Activated CD4-positive, alpha-beta T cell treated with anti-CD3 and anti-CD28 coated beads, Interleukin-2, amount 10 ng/mL, durations not matched to agents 24 days and 14 days (primary cell): ENCODE measurements at regions of chr7 and their contacts with region 1.

Region 1: DNA sequence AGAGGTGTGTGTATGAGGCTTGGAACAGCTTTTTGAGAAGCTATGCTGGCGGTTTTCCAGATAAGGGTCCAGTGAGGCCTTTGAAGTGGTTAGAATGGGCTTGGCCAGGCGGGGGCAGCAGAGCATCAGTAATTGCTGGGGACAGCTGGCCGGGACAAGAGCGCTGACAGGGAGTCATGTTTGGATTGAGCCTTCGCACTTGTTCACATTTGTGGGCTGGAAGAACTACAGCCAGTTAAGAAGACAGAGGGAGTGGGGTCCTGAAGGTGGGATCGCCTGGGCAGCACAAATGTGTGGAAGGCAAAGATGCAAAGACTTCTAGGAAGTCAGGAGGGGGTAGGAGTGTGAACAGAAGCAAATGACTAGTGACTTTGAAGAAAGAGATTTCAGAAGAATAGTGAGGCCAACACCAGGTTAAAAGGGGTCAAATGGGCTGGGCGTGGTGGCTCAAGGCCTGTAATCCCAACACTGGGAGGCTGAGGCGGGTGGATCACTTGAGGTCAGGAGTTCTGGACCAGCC is 12.7 kb upstream of the SDHAF3 start:
- DNase-seq: peak; percentile 89
- H3K4me3 Mint-ChIP-seq: no peak overlapping the region
- H3K27ac Mint-ChIP-seq: no peak overlapping the region
- H3K4me1 Mint-ChIP-seq: no peaks in the 10 kb centered on the region
- H3K27me3 Mint-ChIP-seq: peaks cover 15% of the 10 kb centered on the region

Region 2: GRCh38 chr7:97094284-97094930 is 10.4 kb before region 1 on chr7:
- intact Hi-C with region 1: no loop called
- DNase-seq: peak; percentile 27
- H3K4me3 Mint-ChIP-seq: no peak overlapping the region
- H3K27ac Mint-ChIP-seq: no peak overlapping the region
- H3K4me1 Mint-ChIP-seq: no peaks in the 10 kb centered on the region
- H3K27me3 Mint-ChIP-seq: peaks cover 24% of the 10 kb centered on the region

Region 3: GRCh38 chr7:97130417-97131139 is 25.8 kb after region 1 on chr7:
- intact Hi-C with region 1: no loop called
- DNase-seq: peak; percentile 44
- H3K4me3 Mint-ChIP-seq: no peak overlapping the region
- H3K27ac Mint-ChIP-seq: no peak overlapping the region
- H3K4me1 Mint-ChIP-seq: no peaks in the 10 kb centered on the region
- H3K27me3 Mint-ChIP-seq: no peaks in the 10 kb centered on the region

Region 4: GRCh38 chr7:97179454-97180104 is 74.8 kb after region 1 on chr7:
- intact Hi-C with region 1: loop called (anchors 1 kb)
- DNase-seq: peak; percentile 81
- H3K4me3 Mint-ChIP-seq: no peak overlapping the region
- H3K27ac Mint-ChIP-seq: no peak overlapping the region
- H3K4me1 Mint-ChIP-seq: no peaks in the 10 kb centered on the region
- H3K27me3 Mint-ChIP-seq: no peaks in the 10 kb centered on the region

Region 5: GRCh38 chr7:97835296-97836138 is 730.7 kb after region 1 on chr7:
- intact Hi-C with region 1: loop called (anchors 1 kb)
- DNase-seq: peak; percentile 86
- H3K4me3 Mint-ChIP-seq: no peak overlapping the region
- H3K27ac Mint-ChIP-seq: no peak overlapping the region
- H3K4me1 Mint-ChIP-seq: no peaks in the 10 kb centered on the region
- H3K27me3 Mint-ChIP-seq: peaks cover 39% of the 10 kb centered on the region